Astrocyte of the cerebellum (primary cell): ENCODE measurements at regions of chr6 and their contacts with region 1.

Region 1: DNA sequence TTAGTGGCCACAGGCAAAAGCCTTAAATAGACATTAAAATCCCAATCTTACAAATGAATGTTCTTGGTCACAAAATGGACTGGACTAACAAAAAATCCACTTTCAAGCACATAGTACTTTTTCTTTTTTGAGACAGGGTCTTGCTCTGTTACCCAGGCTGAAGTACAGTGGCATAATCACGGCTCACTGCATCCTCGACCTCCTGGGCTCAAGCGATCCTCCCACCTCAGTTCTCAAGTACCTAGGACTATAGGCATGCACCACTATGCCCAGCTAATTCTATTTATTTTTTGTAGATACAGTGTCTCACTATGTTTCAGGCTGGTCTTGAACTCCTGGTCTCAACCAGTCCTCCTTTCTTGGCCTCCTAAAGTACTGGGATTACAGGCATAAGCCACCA is 59.4 kb downstream of the MAP3K5 start:
- DNase-seq: no peak
- H3K4me3 ChIP-seq: no peak overlapping the region
- CTCF ChIP-seq: no peak

Region 2: GRCh38 chr6:136657666-136658065 is 75.2 kb before region 1 on chr6:
- in situ Hi-C with region 1: loop called (anchors 5 kb)
- DNase-seq: no peak
- H3K4me3 ChIP-seq: no peak overlapping the region
- CTCF ChIP-seq: no peak